GM18951 (cell line): ENCODE measurements at regions of chr1 and their contacts with region 1.

Region 1: DNA sequence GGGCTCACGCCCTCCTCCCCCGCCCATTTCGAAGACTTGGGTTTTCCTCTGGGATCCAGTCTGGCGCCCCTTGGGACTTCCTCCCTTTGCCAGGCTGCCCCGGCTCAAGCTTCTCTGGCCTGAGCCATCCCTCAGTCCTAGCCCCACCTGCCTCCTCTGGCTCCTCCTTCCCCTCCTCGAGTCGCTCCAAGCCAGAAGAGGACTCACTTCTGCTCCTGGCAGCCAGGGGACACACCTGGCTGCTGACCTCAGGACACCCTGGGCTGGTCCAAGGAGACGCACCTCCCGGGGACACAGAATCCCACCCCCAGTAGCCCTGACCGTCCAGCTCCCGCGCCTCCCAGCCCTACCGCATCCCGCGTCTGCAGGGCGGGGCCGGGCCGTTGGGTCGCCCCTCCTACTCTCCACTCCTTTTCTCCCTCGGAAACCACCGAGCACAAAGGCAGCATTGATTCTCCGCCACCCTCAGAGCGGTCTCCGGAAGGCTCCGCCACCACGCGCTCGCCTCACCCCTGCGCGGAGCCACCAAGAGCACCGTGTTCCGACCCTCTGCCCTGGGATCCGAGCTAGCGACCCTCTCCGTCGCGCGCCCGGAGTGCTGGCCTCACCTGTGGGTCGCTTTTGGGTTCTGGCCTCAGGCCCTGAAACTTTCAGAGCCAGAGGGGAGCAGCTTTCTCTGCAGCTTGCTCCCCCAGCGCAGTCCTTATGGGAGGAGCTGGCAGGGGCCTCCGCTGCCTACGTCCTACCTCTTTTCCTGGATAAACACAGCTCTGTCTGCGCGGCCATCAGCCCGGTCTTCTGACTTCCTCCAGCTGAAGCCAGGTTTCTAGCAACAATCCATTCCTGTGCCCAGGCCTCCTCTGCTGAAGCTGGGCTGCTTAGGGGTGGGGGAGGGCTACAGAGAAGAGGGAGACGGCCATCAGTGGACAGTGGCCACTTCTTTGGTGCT is at the start of gene C2CD4D:
- POLR2A ChIP-seq: peak; percentile 57

Region 2: GRCh38 chr1:151594143-151594625 is 245.5 kb before region 1 on chr1:
- in situ Hi-C with region 1: loop called (anchors 25 kb)
- POLR2A ChIP-seq: no peak

Region 3: GRCh38 chr1:151888972-151889570 is 49.3 kb after region 1 on chr1:
- in situ Hi-C with region 1: no loop called
- POLR2A ChIP-seq: no peak

Region 4: GRCh38 chr1:152013664-152014237 is 174.0 kb after region 1 on chr1:
- in situ Hi-C with region 1: no loop called
- POLR2A ChIP-seq: no peak

Region 5: GRCh38 chr1:152148981-152149380 is 309.2 kb after region 1 on chr1:
- in situ Hi-C with region 1: no loop called
- POLR2A ChIP-seq: no peak